Dendritic cell treated with granulocyte-macrophage colony-stimulating factor and Interleukin-4, amounts not matched to agents 40 ng/mL and 50 ng/mL, for 4 days (primary cell): ENCODE measurements at regions of chr19 and their contacts with region 1.

Region 1: GRCh38 chr19:48506138-48506733 is 5.4 kb downstream of the LMTK3 start:
- H3K4me3 Mint-ChIP-seq: no peak overlapping the region
- H3K27ac Mint-ChIP-seq: no peak overlapping the region
- H3K4me1 Mint-ChIP-seq: peaks cover 22% of the 10 kb centered on the region
- H3K27me3 Mint-ChIP-seq: peaks cover 45% of the 10 kb centered on the region

Region 2: GRCh38 chr19:48468775-48469288 is 37.4 kb before region 1 on chr19:
- intact Hi-C with region 1: no loop called
- H3K4me3 Mint-ChIP-seq: peak overlapping the region; percentile 80
- H3K27ac Mint-ChIP-seq: peak overlapping the region; percentile 87
- H3K4me1 Mint-ChIP-seq: peaks cover 47% of the 10 kb centered on the region
- H3K27me3 Mint-ChIP-seq: peaks cover 1% of the 10 kb centered on the region

Region 3: DNA sequence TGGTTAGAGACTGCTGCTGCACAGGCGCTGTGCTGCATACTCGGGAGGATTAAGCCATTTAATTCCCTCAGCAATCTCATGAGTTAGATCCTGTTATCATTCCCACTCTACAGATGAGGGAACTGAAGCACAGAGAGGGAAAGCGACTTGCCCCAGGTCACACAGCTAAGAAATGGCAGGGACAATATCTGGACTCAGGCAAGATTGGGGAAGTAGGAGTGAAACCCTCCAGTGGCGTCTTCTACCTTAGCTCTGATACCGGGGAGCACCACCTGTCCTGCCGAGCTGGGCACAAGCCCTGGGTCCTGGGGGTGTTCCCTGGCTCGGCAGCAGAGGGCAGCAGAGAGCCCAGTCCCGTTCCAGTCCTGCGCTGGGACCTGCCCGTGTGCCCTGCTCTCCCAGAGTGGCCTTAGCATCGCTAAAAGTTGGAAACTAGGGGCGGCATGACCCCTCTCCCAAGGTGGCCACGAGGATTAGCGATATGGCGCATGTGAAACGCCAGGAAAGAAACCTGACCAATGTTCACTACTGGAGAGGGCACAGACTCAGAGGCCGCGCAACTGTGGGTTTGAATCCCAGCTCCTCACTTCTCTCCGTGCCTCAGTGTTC is 16.5 kb before region 1 on chr19:
- intact Hi-C with region 1: no loop called
- H3K4me3 Mint-ChIP-seq: no peak overlapping the region
- H3K27ac Mint-ChIP-seq: no peak overlapping the region
- H3K4me1 Mint-ChIP-seq: peaks cover 31% of the 10 kb centered on the region
- H3K27me3 Mint-ChIP-seq: peaks cover 57% of the 10 kb centered on the region

Region 4: GRCh38 chr19:48588670-48589399 is 82.6 kb after region 1 on chr19:
- intact Hi-C with region 1: loop called (anchors 1 kb)
- H3K4me3 Mint-ChIP-seq: peak overlapping the region; percentile 77
- H3K27ac Mint-ChIP-seq: peak overlapping the region; percentile 77
- H3K4me1 Mint-ChIP-seq: peaks cover 20% of the 10 kb centered on the region
- H3K27me3 Mint-ChIP-seq: peaks cover 18% of the 10 kb centered on the region